Prostate gland (tissue), 2 donors: ENCODE measurements at regions of chr11 and their contacts with region 1.

Region 1: GRCh38 chr11:8964324-8965320 is at the start of gene TMEM9B:
- DNase-seq: peak; percentile 91
- H3K4me3 ChIP-seq: peak within 1 kb of the TSS; percentile 77 to 87
- H3K27ac ChIP-seq: peak within 1 kb of the TSS; percentile 91 to 93
- H3K4me1 ChIP-seq: no peaks in the 10 kb centered on the region
- H3K27me3 ChIP-seq: no peaks in the 10 kb centered on the region
- CTCF ChIP-seq: peak in 2 of 4 experiments; percentile 2 to 14
- POLR2A ChIP-seq: peak; percentile 79
- total RNA-seq, gene TMEM9B: 51.3 to 58.9 TPM

Region 2: DNA sequence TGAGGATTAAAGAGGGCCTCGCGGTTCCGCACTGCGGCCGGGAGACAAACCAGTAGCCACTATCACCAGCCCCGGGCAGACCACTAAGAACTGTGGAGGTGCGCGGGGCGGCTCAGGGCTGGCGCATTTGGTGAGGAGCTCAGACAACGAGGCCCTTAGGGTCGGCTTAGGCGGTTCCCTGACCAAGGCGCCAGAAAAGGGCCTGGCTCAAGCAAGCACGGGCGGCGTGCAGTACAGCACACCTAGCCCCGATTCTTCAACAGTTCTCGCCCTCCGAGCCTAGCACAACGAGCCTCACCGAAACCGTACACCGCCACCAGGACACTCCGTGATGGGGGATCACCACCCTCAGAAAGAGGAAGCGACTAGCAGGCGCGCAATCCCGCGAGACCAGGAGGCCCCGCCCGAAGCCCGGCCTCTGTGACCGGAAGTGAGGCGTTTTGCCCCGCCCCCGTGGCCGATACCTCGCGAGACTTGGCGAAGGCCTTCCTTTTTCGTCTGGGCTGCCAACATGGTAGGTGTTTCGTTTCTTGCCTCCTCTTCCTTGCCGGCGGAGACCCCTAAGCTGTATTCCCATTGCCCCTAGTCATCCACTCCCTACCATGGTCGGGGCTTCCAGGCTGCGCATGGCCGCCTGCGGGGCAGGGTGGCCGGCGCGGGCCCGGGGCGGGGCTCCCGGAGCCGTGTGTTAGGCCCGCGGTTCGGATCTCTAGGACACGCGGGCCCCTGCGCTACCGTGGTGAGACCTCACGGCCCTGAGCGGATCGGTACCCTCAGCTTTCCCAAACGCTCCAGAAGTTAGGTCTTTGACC is 282.1 kb before region 1 on chr11 and contains the starts of genes RPL27A and TRIM66:
- intact Hi-C with region 1: loop called (anchors 5 kb)
- DNase-seq: peak; percentile 97
- H3K4me3 ChIP-seq: peak within 1 kb of the TSS; percentile 83 to 84
- H3K27ac ChIP-seq: peak within 1 kb of the TSS; percentile 91
- H3K4me1 ChIP-seq: peaks cover 8% of the 10 kb centered on the region
- H3K27me3 ChIP-seq: no peaks in the 10 kb centered on the region
- CTCF ChIP-seq: peak in 2 of 4 experiments; percentile 46 to 58
- POLR2A ChIP-seq: peak; percentile 97
- total RNA-seq, gene RPL27A: 693 to 1,360 TPM
- total RNA-seq, gene TRIM66: 2.8 to 10.5 TPM

Region 3: DNA sequence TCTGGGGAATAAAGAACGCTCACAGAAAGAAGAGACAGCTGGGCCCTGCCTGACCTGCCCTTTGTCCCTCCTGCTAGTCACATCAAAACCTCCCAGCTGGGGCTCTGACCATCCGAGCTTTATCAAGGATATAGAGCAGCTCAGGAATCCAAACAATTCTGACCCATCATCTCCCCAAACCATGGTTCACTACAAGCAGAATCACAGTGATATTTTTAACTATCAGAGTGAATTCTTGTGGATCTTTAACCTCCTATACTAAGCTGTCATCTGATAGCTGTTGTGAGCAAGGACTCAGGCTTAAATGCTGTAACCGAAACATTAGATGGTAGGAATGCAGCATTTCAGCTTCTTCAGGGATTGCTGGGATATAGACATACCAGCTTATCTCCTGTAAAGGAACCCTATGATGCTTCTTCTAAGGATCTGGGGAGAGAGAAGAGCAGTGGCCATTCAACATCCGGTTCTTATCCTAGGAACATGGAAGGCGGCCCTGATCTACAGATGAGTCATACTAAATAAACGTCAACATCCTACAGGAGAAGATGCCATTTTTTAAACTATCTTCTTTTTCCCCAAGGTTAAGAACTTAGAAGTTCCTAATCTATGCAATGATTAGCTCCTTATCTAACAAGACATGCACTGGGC is 138.4 kb before region 1 on chr11:
- intact Hi-C with region 1: loop called (anchors 5 kb)
- DNase-seq: no peak
- H3K4me3 ChIP-seq: no peak overlapping the region
- H3K27ac ChIP-seq: no peak overlapping the region
- H3K4me1 ChIP-seq: no peaks in the 10 kb centered on the region
- H3K27me3 ChIP-seq: no peaks in the 10 kb centered on the region
- CTCF ChIP-seq: no peak
- POLR2A ChIP-seq: no peak

Region 4: DNA sequence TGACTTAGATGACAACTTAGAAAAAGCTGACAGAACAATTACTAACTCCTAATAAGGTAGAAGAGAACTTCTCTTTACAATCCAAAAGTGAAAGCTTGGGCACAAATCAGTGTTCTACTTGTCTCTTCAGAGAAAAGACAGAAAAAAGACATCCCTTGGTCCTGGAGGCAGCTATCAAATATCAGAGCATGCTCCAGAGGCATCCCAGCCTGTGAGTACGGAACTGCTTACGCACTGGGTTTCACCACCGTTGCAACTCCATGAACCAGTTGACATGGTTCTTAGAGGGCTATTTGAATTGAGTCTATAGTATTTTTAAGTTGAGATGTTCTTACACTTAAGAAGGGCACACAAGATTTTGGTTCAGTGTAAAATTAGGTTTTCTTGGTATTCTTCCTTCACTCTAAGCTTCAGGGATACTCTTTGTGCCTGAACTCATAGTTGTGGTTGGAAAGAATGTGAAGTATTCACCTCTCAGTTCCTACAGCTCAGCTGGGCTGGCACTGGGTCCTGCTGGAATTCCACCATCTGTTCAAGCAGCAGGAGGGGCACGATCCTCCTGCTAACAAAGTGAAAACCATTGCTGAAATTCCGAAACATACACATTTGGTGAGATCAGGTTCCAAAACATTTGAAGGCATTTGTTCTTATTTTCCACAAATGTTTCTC is 47.3 kb before region 1 on chr11:
- intact Hi-C with region 1: loop called (anchors 2 kb)
- DNase-seq: peak; percentile 43
- H3K4me3 ChIP-seq: no peak overlapping the region
- H3K27ac ChIP-seq: peak overlapping the region; percentile 39 to 43
- H3K4me1 ChIP-seq: no peaks in the 10 kb centered on the region
- H3K27me3 ChIP-seq: no peaks in the 10 kb centered on the region
- CTCF ChIP-seq: no peak
- POLR2A ChIP-seq: no peak

Region 5: GRCh38 chr11:9047964-9048523 is 83.4 kb after region 1 on chr11:
- intact Hi-C with region 1: no loop called
- DNase-seq: no peak
- H3K4me3 ChIP-seq: no peak overlapping the region
- H3K27ac ChIP-seq: peak overlapping the region in 1 of 2 donors; percentile 4
- H3K4me1 ChIP-seq: no peaks in the 10 kb centered on the region
- H3K27me3 ChIP-seq: peaks cover 2% of the 10 kb centered on the region
- CTCF ChIP-seq: no peak
- POLR2A ChIP-seq: no peak